ENCODE measurements at regions of chr11 and their contacts with region 1.

Region 1: DNA sequence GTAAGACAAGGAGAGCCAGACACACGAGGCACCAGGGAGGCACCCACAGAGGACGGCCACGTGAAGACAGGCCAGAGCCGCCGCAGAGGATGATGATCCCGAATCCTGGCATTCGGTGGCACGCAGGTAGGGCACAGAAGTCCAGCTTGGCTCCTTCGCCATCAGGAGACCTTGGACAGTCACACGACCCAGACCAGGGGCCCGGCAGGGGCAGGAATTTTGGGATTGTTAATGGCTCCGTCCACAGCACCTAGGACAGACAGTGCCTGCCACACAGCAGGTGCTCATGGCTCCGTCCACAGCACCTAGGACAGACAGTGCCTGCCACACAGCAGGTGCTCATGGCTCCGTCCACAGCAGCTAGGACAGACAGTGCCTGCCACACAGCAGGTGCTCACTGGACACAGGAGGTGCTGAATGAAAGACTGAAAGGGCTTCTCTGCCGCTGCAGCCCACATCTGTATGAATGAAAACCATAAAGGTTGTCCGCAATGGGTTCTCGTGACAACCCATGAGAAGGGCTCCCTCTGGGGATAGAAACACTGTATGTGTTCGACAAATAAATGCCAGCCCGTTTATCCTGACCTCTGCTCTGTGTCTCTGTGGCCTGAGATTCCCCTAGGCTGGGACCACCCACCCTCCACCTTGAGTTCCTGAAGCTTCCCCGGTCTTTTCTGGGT is 341.6 kb downstream of the CTTN start:
- DNase-seq: no peak
- ATAC-seq: no peak

Region 2: GRCh38 chr11:71322192-71322735 is 582.3 kb after region 1 on chr11:
- intact Hi-C with region 1: loop called in 1 of 2 experiments (anchors 5 kb)
- DNase-seq: no peak
- ATAC-seq: no peak

Region 3: DNA sequence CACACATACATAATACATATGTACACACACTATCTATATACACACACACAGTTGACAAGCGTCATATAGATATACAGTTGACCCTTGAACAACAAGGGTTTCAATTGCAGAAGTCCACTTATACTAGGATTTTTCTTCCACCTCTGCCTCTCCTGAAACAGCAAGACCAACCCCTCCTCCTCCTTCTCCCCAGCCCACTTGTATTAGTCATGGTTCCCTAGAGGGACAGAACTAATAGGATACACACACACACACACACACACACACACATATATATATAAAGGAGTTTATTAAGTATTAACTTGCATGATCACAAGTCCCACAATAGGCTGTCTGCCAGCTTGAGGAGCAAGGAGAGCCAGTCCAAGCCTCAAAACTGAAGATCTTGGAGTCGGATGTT is 615.3 kb after region 1 on chr11:
- intact Hi-C with region 1: no loop called
- DNase-seq: no peak
- ATAC-seq: no peak